Motor neuron (in vitro differentiated cells): ENCODE measurements at regions of chr7 and their contacts with region 1.

Region 1: GRCh38 chr7:16564909-16565426 is 38.3 kb downstream of the LRRC72 start:
- ATAC-seq: peak in 5 of 8 experiments; percentile 35 to 64 (median 42)
- H3K4me3 ChIP-seq: no peak overlapping the region
- H3K27ac ChIP-seq: no peak overlapping the region
- H3K4me1 ChIP-seq: no peaks in the 10 kb centered on the region

Region 2: DNA sequence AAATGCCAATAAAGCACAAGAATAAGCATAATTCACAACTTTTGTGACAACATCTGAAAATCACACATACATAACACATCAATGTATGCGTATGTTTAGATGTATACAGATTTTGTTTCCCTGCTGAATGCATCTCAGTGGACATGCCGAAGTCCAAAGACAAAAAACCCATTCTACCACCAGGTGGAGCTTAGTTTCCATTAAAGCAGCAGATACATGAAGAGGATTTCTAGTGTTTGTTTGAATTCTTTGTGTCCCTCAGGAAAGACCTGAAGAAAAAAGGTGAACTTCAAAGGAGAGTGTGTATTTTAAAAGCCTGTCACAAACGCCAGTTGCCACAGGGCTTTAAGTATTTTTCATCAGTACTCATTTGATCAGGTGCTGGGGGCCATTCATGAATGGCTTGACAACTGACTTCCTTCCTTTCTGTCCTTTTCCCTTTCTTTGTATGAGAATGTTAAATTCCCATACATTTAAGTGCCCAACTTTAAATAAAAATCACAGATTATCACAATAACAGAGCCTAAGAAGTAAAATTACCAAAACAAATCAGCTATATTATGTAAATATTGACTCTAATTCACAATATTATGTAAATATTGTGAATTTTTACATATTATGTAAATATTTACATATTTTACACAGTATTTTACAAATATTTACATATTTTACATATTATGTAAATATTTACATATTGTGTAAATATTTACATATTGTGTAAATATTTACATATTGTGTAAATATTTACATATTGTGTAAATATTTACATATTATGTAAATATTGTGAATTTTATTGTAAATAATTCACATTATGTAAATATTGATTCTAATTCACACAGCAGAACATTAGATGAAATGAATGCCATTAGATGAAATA is 486.7 kb before region 1 on chr7:
- in situ Hi-C with region 1: loop called in 5 of 9 experiments (anchors 10 to 25 kb)
- ATAC-seq: peak in 7 of 8 experiments; percentile 50 to 71 (median 57)
- H3K4me3 ChIP-seq: no peak overlapping the region
- H3K27ac ChIP-seq: no peak overlapping the region
- H3K4me1 ChIP-seq: peaks cover 0 to 2% of the 10 kb centered on the region in 2 donors

Region 3: GRCh38 chr7:16083931-16084330 is 481.0 kb before region 1 on chr7:
- in situ Hi-C with region 1: loop called in 4 of 9 experiments (anchors 10 to 25 kb)
- ATAC-seq: peak in 2 of 8 experiments; percentile 35 to 52
- H3K4me3 ChIP-seq: no peak overlapping the region
- H3K27ac ChIP-seq: no peak overlapping the region
- H3K4me1 ChIP-seq: no peaks in the 10 kb centered on the region

Region 4: GRCh38 chr7:16114633-16115032 is 450.3 kb before region 1 on chr7:
- in situ Hi-C with region 1: loop called in 3 of 9 experiments (anchors 25 kb)
- ATAC-seq: no peak
- H3K4me3 ChIP-seq: no peak overlapping the region
- H3K27ac ChIP-seq: no peak overlapping the region
- H3K4me1 ChIP-seq: no peaks in the 10 kb centered on the region

Region 5: DNA sequence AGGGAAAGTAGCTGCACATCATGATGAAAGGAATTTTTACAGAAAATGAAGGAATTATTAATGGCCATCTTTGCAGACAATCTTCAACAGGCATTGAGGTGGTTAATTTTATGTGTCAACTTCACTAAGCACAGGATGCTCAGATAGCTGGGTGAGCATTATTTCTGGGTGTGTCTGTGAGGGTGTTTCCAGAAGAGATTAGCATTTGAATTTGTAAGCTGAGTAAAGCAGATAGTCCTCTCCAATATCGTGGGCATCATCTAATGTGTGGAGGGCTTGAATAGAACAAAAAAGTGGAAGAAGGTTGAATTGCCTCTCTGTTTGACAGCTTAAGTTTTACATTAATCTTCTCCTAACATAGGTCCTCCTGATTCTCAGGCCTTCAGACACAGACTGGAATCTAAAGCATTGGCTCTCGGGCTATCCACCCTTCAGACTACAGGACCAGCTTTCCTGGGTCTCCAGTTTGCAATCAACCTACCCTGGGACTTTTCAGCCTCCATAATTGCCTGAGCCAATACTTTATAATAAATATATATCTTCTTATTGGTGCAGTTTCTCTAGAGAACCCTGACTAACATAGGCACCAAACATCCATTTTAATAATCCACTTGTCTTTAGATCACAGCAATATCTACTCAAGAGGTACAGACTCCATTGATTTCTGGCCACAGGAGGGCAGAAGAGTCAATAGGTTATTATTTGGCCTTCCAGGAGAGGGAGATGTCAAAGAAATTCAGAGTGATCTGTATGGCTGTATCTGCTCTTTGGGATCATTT is 133.1 kb before region 1 on chr7:
- in situ Hi-C with region 1: loop called in 2 of 9 experiments (anchors 10 to 25 kb)
- ATAC-seq: peak in 4 of 8 experiments; percentile 42 to 90 (median 76)
- H3K4me3 ChIP-seq: no peak overlapping the region
- H3K27ac ChIP-seq: no peak overlapping the region
- H3K4me1 ChIP-seq: no peaks in the 10 kb centered on the region

Region 6: GRCh38 chr7:16465469-16466361 is 99.3 kb before region 1 on chr7 and contains the start of gene SOSTDC1:
- in situ Hi-C with region 1: loop called in 1 of 9 experiments (anchors 25 kb)
- ATAC-seq: peak; percentile 24 to 82 (median 72)
- H3K4me3 ChIP-seq: peak within 1 kb of the TSS; percentile 7 to 33 (median 29)
- H3K27ac ChIP-seq: peak within 1 kb of the TSS in 1 of 2 donors; percentile 41
- H3K4me1 ChIP-seq: peaks cover 8 to 20% of the 10 kb centered on the region in 2 donors
- total RNA-seq, gene SOSTDC1: 0.54 to 39.0 (median 1.7) TPM in 7 of 8 experiments, not detected in the other

Region 7: GRCh38 chr7:16509829-16510228 is 55.1 kb before region 1 on chr7:
- in situ Hi-C with region 1: no loop called
- ATAC-seq: no peak
- H3K4me3 ChIP-seq: no peak overlapping the region
- H3K27ac ChIP-seq: no peak overlapping the region
- H3K4me1 ChIP-seq: no peaks in the 10 kb centered on the region

Region 8: DNA sequence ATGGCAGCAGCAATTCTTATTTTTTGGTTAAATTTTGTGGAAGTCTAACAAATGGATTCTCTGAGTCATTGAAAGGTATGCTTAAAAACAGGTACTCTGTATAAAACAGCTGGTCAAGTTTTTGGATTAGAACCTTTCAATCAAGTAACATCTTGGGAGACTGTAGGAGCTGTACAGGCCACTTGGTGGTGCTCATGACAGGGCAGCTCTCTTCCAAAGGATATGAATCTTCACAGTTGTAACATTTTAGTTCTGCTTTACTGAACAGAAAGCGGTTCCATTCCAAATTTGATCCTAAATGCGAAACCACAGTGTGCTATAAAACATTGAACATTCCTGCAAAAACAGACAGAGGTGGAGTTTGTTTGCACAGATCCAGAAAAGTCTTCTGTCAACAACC is 361.3 kb after region 1 on chr7:
- in situ Hi-C with region 1: no loop called
- ATAC-seq: peak in 4 of 8 experiments; percentile 52 to 94 (median 90)
- H3K4me3 ChIP-seq: no peak overlapping the region
- H3K27ac ChIP-seq: no peak overlapping the region
- H3K4me1 ChIP-seq: no peaks in the 10 kb centered on the region